ENCODE measurements at regions of chr12 and their contacts with region 1.

Region 1: DNA sequence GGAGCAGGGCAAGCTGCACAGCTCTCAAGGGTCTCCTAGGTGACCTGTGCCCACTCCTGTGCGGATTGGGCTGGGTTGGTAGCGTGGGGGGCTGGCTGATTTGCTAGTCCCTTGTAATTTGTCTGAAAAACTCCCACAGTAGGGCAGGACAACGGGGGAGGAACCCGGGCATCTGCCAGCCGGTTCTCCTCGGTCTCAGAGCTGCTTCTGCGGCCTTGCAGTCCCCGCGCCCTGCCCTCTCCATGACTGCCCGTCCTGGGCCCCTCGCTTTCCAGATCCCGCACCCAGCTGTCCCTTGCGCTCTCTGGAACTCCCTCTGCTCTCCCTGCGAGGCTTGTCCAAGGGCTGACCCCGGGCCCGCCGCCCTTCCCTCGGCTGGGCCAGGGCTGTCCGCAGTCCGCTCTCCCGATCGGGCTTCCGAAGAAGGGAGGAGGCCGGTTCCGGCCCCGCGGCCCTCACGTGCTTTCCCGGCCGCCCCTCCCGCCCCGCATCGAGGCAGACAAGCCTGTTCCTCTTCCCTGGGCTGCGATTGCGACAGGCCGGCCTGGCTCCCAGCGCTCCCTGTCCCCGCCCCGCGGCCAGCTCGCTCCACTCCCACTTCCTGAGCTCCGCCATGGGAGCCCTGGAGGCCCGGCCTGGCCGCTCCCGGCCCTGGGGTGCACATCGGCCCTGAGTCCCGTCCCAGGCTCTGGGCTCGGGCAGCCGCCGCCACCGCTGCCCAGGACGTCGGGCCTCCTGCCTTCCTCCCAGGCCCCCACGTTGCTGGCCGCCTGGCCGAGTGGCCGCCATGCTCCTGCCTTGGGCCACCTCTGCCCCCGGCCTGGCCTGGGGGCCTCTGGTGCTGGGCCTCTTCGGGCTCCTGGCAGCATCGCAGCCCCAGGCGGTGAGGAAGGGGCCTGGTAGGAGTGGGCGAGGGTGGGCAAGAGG is at the start of gene LTBR:
- DNase-seq: peak; percentile 96 to 98
- ATAC-seq: peak; percentile 96 to 98 (median 97)
- H3K4me3 ChIP-seq: peak within 1 kb of the TSS; percentile 53 to 94 (median 82)
- H3K27ac ChIP-seq: peak within 1 kb of the TSS; percentile 63 to 98 (median 95)
- H3K4me1 ChIP-seq: peaks cover 5 to 65% (median 28%) of the 10 kb centered on the region in 9 donors
- H3K27me3 ChIP-seq: no peaks in the 10 kb centered on the region
- CTCF ChIP-seq: peak in 5 of 9 donors; percentile 15 to 48 (median 33)
- total RNA-seq, gene LTBR: 14.1 to 49.1 (median 20.8) TPM

Region 2: GRCh38 chr12:6116175-6117021 is 267.4 kb before region 1 on chr12:
- intact Hi-C with region 1: no loop called
- DNase-seq: peak; percentile 47 to 60
- ATAC-seq: peak; percentile 42 to 73 (median 64)
- H3K4me3 ChIP-seq: peak overlapping the region in 4 of 10 donors; percentile 8 to 20 (median 16)
- H3K27ac ChIP-seq: peak overlapping the region; percentile 54 to 91 (median 89)
- H3K4me1 ChIP-seq: peaks cover 3 to 75% (median 23%) of the 10 kb centered on the region in 9 donors
- H3K27me3 ChIP-seq: peaks cover 0 to 4% (median 0%) of the 10 kb centered on the region in 7 donors
- CTCF ChIP-seq: no peak

Region 3: DNA sequence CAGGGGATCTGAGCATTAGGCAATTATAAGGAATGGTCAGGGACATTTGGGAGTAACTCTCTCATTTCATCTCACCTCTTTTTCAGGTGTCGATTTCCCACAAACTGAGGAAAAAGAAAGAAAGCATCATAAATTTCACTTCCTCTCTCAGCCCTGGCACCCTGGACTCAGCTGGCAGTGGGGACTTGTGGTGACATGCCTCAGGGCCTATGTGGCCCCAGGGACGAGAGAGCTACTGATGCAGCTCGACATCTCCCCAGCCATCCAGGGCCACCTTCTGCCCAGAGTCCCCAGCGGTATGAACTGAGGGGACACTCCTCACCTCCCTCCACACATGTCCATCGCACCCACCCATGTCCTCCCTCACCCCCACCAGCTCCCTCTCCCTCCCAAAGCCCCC is 53.6 kb before region 1 on chr12:
- intact Hi-C with region 1: loop called in 7 of 10 experiments (anchors 2 to 10 kb)
- DNase-seq: no peak
- ATAC-seq: no peak
- H3K4me3 ChIP-seq: no peak overlapping the region
- H3K27ac ChIP-seq: peak overlapping the region in 3 of 10 donors; percentile 2 to 55 (median 7)
- H3K4me1 ChIP-seq: peaks cover 20 to 100% (median 55%) of the 10 kb centered on the region in 9 donors
- H3K27me3 ChIP-seq: no peaks in the 10 kb centered on the region
- CTCF ChIP-seq: no peak

Region 4: GRCh38 chr12:6341417-6342139 is 42.3 kb before region 1 on chr12 and contains the start of gene TNFRSF1A:
- intact Hi-C with region 1: loop called in 6 of 10 experiments (anchors 2 to 10 kb)
- DNase-seq: peak; percentile 62 to 86
- ATAC-seq: peak; percentile 76 to 87 (median 83)
- H3K4me3 ChIP-seq: peak within 1 kb of the TSS; percentile 68 to 99 (median 92)
- H3K27ac ChIP-seq: peak within 1 kb of the TSS; percentile 91 to 100 (median 98)
- H3K4me1 ChIP-seq: peaks cover 30 to 82% (median 70%) of the 10 kb centered on the region in 9 donors
- H3K27me3 ChIP-seq: no peaks in the 10 kb centered on the region
- CTCF ChIP-seq: no peak
- total RNA-seq, gene TNFRSF1A: 29.4 to 100 (median 39.2) TPM